Calu3 (cell line): ENCODE measurements at regions of chr17 and their contacts with region 1.

Region 1: GRCh38 chr17:16453493-16453851 is 38.1 kb downstream of the TRPV2 start:
- DNase-seq: no peak
- H3K4me3 Mint-ChIP-seq: no peak overlapping the region
- H3K27ac Mint-ChIP-seq: no peak overlapping the region
- H3K4me1 Mint-ChIP-seq: peaks cover 8% of the 10 kb centered on the region
- H3K27me3 Mint-ChIP-seq: no peaks in the 10 kb centered on the region
- CTCF ChIP-seq: no peak

Region 2: GRCh38 chr17:16081507-16082087 is 371.9 kb before region 1 on chr17:
- CTCF ChIA-PET with region 1: no interaction called
- intact Hi-C with region 1: no loop called
- DNase-seq: no peak
- H3K4me3 Mint-ChIP-seq: no peak overlapping the region
- H3K27ac Mint-ChIP-seq: no peak overlapping the region
- H3K4me1 Mint-ChIP-seq: no peaks in the 10 kb centered on the region
- H3K27me3 Mint-ChIP-seq: no peaks in the 10 kb centered on the region
- CTCF ChIP-seq: no peak

Region 3: DNA sequence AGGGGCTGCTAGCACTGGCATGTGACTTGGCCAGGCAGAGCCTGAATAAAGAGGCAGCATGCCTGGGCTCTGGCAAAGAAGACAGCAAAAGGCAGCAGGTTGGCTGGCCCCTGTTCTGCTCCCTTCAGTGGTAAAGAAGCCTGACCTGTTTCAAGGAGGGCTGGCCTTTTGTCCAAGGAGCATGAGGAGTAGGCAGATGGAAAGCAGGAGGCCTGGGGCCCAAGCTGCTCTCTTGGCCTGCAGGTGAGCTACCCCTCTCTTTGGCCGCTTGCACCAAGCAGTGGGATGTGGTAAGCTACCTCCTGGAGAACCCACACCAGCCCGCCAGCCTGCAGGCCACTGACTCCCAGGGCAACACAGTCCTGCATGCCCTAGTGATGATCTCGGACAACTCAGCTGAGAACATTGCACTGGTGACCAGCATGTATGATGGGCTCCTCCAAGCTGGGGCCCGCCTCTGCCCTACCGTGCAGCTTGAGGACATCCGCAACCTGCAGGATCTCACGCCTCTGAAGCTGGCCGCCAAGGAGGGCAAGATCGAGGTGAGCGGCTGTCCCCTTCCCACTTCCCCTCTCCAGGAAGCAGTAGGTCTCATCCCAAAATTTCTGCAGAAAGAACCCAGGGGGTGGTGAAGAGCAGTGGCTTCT is 30.1 kb before region 1 on chr17:
- CTCF ChIA-PET with region 1: no interaction called
- intact Hi-C with region 1: no loop called
- DNase-seq: no peak
- H3K4me3 Mint-ChIP-seq: no peak overlapping the region
- H3K27ac Mint-ChIP-seq: no peak overlapping the region
- H3K4me1 Mint-ChIP-seq: peaks cover 15% of the 10 kb centered on the region
- H3K27me3 Mint-ChIP-seq: no peaks in the 10 kb centered on the region
- CTCF ChIP-seq: no peak

Region 4: GRCh38 chr17:16521070-16521727 is 67.7 kb after region 1 on chr17:
- CTCF ChIA-PET with region 1: interaction called, 13 read pairs
- intact Hi-C with region 1: loop called (anchors 1 kb)
- DNase-seq: peak; percentile 70
- H3K4me3 Mint-ChIP-seq: no peak overlapping the region
- H3K27ac Mint-ChIP-seq: no peak overlapping the region
- H3K4me1 Mint-ChIP-seq: peaks cover 21% of the 10 kb centered on the region
- H3K27me3 Mint-ChIP-seq: peaks cover 7% of the 10 kb centered on the region
- CTCF ChIP-seq: peak; percentile 51